Body of pancreas (tissue), 4 donors: ENCODE measurements at regions of chr9 and their contacts with region 1.

Region 1: DNA sequence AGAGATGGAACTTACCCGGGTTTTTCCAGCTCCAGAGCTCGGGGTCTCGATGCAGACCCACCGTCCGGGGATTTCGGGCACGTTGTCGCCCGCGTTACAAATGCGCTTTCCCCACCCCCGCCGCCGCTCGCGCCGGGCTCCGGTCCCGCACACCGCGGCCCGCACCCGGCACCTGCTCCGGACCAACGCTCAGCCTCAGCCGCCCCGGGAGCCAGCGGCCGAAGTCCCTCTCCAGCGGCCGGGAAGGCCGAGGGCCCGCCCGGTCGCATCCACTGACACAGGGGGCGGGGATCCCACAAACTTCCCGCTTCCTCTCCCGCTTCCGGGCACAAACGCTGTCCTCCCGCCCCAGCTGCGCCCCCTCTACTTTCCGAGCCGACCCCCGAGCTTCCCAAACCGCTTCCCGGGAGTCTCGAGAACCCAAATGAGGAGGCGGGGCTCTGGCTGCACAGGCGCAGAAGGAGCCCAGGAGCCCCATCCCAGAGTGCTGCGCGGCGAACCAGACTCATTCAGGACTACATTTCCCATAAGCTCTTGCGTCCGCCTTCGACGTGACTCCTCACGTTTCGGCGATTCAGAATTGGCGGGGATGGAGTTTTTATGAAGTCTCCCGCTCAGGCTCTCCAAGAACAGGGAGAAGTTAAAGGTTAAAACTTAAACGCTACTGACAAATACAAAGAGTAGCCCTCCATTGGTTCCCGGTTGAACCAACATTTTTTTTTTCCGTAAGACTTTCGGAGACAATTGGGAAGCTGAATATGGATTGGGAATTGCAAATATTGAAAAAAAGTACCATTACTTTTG is at the start of gene ZNF782:
- DNase-seq: peak; percentile 93 to 96 (median 95)
- ATAC-seq: peak; percentile 93
- H3K4me3 ChIP-seq: peak within 1 kb of the TSS; percentile 37 to 82
- H3K27ac ChIP-seq: peak within 1 kb of the TSS; percentile 77 to 91 (median 85)
- H3K4me1 ChIP-seq: peaks cover 60% of the 10 kb centered on the region
- H3K27me3 ChIP-seq: no peaks in the 10 kb centered on the region
- CTCF ChIP-seq: no peak
- POLR2A ChIP-seq: peak; percentile 32 to 75 (median 67)
- total RNA-seq, gene ZNF782: 10.4 to 19.8 TPM

Region 2: DNA sequence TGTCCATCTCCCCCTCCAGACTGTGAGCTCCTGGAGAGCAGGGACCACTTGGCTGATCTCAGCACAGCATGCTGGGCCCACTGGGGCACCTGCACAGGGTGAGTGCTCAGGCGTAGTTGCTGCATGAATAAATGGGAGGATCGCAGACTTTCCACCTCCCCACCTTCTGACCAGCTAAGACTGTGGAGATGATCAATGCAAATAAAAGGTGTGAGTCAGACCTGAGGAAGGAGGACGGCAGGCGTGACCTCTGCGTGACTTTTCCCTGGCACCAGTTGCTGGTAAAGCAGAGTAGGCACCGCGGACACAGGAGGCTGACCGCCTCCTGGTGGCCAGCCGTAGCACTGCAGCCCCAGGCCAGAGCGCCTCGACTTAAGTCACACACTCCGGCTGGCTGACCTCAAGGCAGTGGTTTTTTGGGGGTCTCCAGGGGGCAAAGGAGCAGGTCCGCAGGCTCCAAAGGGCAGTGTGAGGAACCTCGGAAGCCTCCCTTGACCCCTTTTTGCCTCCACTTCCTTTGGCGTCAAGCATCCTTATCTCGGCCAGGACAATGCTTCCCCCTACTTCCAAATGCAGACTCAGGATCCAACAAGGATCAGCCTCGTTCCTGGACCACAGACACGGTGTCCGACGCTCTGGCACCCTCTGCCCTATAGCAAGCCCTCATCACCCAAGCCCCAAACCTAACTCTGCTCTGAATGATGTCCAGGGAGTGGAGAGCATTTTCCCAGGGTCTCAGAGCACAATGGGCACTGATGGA is 544.9 kb after region 1 on chr9:
- intact Hi-C with region 1: loop called (anchors 10 kb)
- DNase-seq: peak; percentile 77 to 89 (median 84)
- ATAC-seq: peak; percentile 88
- H3K4me3 ChIP-seq: no peak overlapping the region
- H3K27ac ChIP-seq: no peak overlapping the region
- H3K4me1 ChIP-seq: peaks cover 6% of the 10 kb centered on the region
- H3K27me3 ChIP-seq: no peaks in the 10 kb centered on the region
- CTCF ChIP-seq: peak; percentile 88 to 97 (median 89)
- POLR2A ChIP-seq: no peak